ENCODE measurements at regions of chr7 and their contacts with region 1.

Region 1: GRCh38 chr7:37181550-37181932 is 267.1 kb downstream of the ELMO1 start:
- DNase-seq: no peak
- ATAC-seq: no peak
- H3K4me3 ChIP-seq: no peak overlapping the region
- H3K4me3 Mint-ChIP-seq: no peak overlapping the region
- H3K27ac ChIP-seq: no peak overlapping the region
- H3K27ac Mint-ChIP-seq: no peak overlapping the region
- H3K4me1 ChIP-seq: peaks cover 7% of the 10 kb centered on the region
- H3K4me1 Mint-ChIP-seq: peaks cover 10% of the 10 kb centered on the region
- H3K27me3 ChIP-seq: no peaks in the 10 kb centered on the region
- H3K27me3 Mint-ChIP-seq: no peaks in the 10 kb centered on the region
- CTCF ChIP-seq: no peak

Region 2: GRCh38 chr7:36312344-36313334 is 868.9 kb before region 1 on chr7:
- CTCF ChIA-PET with region 1: no interaction called
- POLR2A ChIA-PET with region 1: no interaction called
- intact Hi-C with region 1: loop called in 1 of 2 experiments (anchors 10 kb)
- DNase-seq: peak in 10 of 14 experiments; percentile 8 to 66 (median 32)
- ATAC-seq: peak; percentile 77
- H3K4me3 ChIP-seq: no peak overlapping the region
- H3K4me3 Mint-ChIP-seq: no peak overlapping the region
- H3K27ac ChIP-seq: no peak overlapping the region
- H3K27ac Mint-ChIP-seq: no peak overlapping the region
- H3K4me1 ChIP-seq: no peaks in the 10 kb centered on the region
- H3K4me1 Mint-ChIP-seq: peaks cover 7% of the 10 kb centered on the region
- H3K27me3 ChIP-seq: no peaks in the 10 kb centered on the region
- H3K27me3 Mint-ChIP-seq: no peaks in the 10 kb centered on the region
- CTCF ChIP-seq: no peak

Region 3: DNA sequence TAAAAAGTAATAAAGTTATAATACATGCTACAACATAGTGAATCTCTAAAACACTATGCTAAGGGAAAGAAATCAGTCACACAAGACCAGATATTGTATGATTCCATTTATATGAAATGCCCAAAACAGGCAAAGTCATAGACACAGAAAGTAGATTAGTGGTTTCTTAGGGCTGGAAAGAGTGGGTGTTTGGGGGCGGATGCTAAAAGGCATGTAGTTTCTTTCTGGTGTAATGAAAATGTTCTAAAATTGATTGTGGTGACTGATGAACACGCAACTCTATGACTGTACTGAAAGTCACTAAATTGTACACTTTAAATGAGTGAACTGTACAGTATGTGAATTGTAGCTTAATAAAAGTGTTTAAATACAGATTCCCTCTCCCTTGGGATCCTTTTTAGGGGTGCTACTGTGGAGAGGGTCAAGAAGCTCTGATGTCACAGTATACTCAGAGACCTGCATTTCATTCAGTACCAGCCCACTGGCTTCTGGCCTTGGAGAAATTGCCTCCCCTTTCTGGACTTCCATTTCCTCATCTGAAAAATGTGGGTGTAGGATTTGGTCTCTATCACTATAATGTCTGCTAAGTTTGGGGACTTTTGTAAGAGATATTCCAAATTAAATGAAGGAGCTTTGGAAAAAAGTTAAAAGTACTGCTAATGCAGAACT is 503.6 kb before region 1 on chr7:
- CTCF ChIA-PET with region 1: interaction called, 6 read pairs
- POLR2A ChIA-PET with region 1: interaction called, 6 read pairs
- intact Hi-C with region 1: loop called (anchors 1 to 2 kb)
- DNase-seq: peak in 2 of 14 experiments; percentile 26 to 48
- ATAC-seq: peak; percentile 39
- H3K4me3 ChIP-seq: no peak overlapping the region
- H3K4me3 Mint-ChIP-seq: peak overlapping the region; percentile 76
- H3K27ac ChIP-seq: peak overlapping the region; percentile 31 to 38
- H3K27ac Mint-ChIP-seq: peak overlapping the region; percentile 90
- H3K4me1 ChIP-seq: peaks cover 15% of the 10 kb centered on the region
- H3K4me1 Mint-ChIP-seq: peaks cover 58% of the 10 kb centered on the region
- H3K27me3 ChIP-seq: no peaks in the 10 kb centered on the region
- H3K27me3 Mint-ChIP-seq: no peaks in the 10 kb centered on the region
- CTCF ChIP-seq: no peak

Region 4: DNA sequence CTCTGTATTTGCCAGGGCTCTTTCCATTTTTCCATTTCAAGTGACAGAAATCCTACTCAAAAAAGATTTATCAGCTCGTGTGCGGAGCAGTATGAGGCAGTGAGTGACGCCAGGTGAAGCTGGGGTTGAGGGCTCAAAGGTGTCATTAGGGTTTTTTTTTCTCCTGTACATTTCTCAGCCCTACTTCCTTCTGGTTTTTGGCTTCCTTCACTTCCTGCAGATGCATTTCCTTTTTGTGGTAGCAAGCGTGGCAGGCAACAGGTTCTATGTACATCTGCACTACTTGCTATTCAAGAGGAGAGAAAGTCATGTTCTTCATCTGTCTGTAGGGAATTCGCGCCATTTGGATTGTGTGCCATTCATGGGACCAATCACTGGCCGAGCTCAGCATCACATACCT is 404.5 kb before region 1 on chr7:
- CTCF ChIA-PET with region 1: no interaction called
- POLR2A ChIA-PET with region 1: no interaction called
- intact Hi-C with region 1: loop called in 1 of 2 experiments (anchors 5 kb)
- DNase-seq: peak; percentile 7 to 87 (median 38)
- ATAC-seq: peak; percentile 69
- H3K4me3 ChIP-seq: peak overlapping the region; percentile 22
- H3K4me3 Mint-ChIP-seq: peak overlapping the region; percentile 78
- H3K27ac ChIP-seq: peak overlapping the region; percentile 7 to 37
- H3K27ac Mint-ChIP-seq: peak overlapping the region; percentile 86
- H3K4me1 ChIP-seq: peaks cover 49% of the 10 kb centered on the region
- H3K4me1 Mint-ChIP-seq: peaks cover 78% of the 10 kb centered on the region
- H3K27me3 ChIP-seq: no peaks in the 10 kb centered on the region
- H3K27me3 Mint-ChIP-seq: no peaks in the 10 kb centered on the region
- CTCF ChIP-seq: no peak

Region 5: DNA sequence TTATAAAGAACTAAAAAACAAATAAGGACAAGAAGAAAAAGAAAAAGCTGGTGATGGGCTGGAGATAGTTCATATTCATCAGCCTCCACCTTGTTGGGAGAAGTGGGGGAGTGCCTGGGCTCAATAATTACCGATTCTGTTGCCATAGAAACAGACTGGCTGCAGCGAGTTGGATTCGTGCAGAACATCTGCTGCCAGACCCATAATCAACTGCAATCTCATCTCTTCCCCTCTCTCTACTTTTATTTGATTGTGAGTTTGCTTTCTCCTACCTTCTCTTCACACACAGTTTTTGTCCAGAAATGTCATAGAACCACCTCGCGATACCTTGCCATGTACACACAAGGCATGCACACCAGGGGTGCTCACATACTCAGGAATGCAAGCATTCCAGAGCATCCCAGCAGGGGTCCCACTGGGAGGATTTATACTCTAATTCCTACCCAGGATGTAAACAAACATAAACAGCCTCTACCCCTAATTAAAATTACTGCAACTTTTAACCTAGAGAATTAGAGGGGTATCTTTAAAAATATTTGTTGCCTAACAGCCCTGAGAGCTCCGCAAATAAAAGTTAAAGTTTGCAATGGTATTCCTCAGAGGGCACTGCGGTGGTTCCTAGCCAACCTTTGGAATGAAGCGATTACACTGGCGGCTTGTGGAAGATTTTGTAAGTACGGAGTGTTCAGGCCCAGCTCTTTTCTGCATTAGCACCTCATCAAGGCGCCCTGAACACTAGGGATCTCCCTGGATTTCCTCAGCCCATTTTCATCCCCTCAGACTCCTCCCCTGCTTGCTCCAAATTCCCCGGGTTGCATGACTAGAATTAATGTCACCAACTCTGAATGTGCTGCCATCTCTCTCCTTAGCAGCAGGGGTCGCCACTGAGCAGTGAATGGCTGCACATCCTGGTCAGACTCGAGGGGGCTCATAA is 194.8 kb before region 1 on chr7:
- CTCF ChIA-PET with region 1: no interaction called
- POLR2A ChIA-PET with region 1: no interaction called
- intact Hi-C with region 1: loop called (anchors 5 to 10 kb)
- DNase-seq: peak; percentile 33 to 72 (median 44)
- ATAC-seq: peak; percentile 77
- H3K4me3 ChIP-seq: no peak overlapping the region
- H3K4me3 Mint-ChIP-seq: no peak overlapping the region
- H3K27ac ChIP-seq: no peak overlapping the region
- H3K27ac Mint-ChIP-seq: no peak overlapping the region
- H3K4me1 ChIP-seq: peaks cover 5% of the 10 kb centered on the region
- H3K4me1 Mint-ChIP-seq: peaks cover 56% of the 10 kb centered on the region
- H3K27me3 ChIP-seq: no peaks in the 10 kb centered on the region
- H3K27me3 Mint-ChIP-seq: no peaks in the 10 kb centered on the region
- CTCF ChIP-seq: peak; percentile 70

Region 6: DNA sequence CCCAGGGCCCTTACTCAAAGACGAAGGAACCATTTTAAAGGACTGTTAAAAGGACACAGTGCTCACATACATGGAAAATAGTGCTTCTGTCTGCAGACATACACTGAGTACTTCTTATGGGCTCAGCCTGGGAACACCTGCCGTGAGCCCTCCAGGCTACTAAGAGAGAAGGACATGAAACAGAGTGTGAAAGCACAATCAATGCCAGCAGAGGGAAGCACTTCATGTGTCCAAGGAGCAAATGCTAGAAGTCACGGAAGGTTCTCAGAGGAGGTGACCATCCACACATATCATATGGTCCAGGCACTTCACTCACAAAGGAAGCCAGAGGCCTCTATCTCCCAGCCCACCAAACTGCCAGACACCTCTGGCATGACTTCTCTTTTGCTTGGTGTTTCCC is 251.6 kb after region 1 on chr7:
- CTCF ChIA-PET with region 1: no interaction called
- POLR2A ChIA-PET with region 1: no interaction called
- intact Hi-C with region 1: no loop called
- DNase-seq: peak in 1 of 14 experiments; percentile 22
- ATAC-seq: no peak
- H3K4me3 ChIP-seq: no peak overlapping the region
- H3K4me3 Mint-ChIP-seq: peak overlapping the region; percentile 74
- H3K27ac ChIP-seq: no peak overlapping the region
- H3K27ac Mint-ChIP-seq: peak overlapping the region; percentile 83
- H3K4me1 ChIP-seq: peaks cover 33% of the 10 kb centered on the region
- H3K4me1 Mint-ChIP-seq: peaks cover 84% of the 10 kb centered on the region
- H3K27me3 ChIP-seq: no peaks in the 10 kb centered on the region
- H3K27me3 Mint-ChIP-seq: no peaks in the 10 kb centered on the region
- CTCF ChIP-seq: no peak

Measured in CD4-positive, alpha-beta T cell (primary cell).